ENCODE measurements at regions of chr10 and their contacts with region 1.

Region 1: GRCh38 chr10:118241229-118242137 is 100.6 kb downstream of the FAM204A start:
- DNase-seq: peak; percentile 67
- ATAC-seq: no peak
- H3K4me3 ChIP-seq: no peak overlapping the region
- H3K4me3 Mint-ChIP-seq: no peak overlapping the region
- H3K27ac ChIP-seq: no peak overlapping the region
- H3K27ac Mint-ChIP-seq: no peak overlapping the region
- H3K4me1 ChIP-seq: no peaks in the 10 kb centered on the region
- H3K4me1 Mint-ChIP-seq: no peaks in the 10 kb centered on the region
- H3K27me3 ChIP-seq: peaks cover 0 to 25% (median 12%) of the 10 kb centered on the region in 4 experiments
- H3K27me3 Mint-ChIP-seq: peaks cover 48% of the 10 kb centered on the region
- CTCF ChIP-seq: peak; percentile 99

Region 2: DNA sequence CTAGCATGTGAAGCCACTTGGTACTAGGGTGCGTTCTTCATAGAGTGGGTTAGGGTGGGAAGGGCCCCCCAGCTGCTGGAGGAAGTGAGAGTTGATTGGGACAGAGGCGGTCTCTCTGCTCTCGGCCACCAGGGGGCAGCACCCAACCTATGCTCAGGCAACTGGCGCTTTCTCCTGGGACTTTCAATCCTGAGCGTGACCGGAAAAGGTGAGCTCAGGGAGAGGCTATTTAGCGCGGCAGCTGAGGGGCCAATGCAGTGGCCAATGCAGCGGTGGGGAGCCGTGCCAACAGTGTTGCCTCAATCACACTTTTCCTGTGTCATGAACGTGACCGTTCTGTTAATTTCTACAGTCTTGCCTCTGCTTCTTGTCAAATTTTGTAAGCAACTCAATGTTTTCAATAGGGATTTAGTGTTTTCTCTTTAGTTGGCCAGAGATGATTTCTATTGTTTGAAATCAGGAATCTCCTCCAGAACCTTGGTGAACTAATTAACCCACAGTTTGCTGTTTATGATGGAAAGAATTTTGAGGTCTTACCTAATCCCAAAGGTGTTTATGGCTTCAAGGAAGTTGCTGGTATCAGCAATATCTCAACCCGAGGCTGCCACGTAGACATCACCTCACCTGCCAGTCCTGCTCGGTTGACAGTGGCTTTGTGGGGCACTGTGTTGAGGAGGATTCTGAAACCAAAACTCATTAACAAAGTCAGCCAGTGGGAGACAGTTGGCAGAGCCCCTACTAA is 798.4 kb before region 1 on chr10:
- CTCF ChIA-PET with region 1: interaction called, 5 read pairs
- POLR2A ChIA-PET with region 1: no interaction called
- intact Hi-C with region 1: loop called (anchors 5 kb)
- DNase-seq: peak; percentile 43
- ATAC-seq: peak; percentile 54
- H3K4me3 ChIP-seq: peak overlapping the region in 1 of 5 experiments; percentile 9
- H3K4me3 Mint-ChIP-seq: no peak overlapping the region
- H3K27ac ChIP-seq: no peak overlapping the region
- H3K27ac Mint-ChIP-seq: no peak overlapping the region
- H3K4me1 ChIP-seq: peaks cover 0 to 3% of the 10 kb centered on the region in 2 donors
- H3K4me1 Mint-ChIP-seq: peaks cover 5% of the 10 kb centered on the region
- H3K27me3 ChIP-seq: no peaks in the 10 kb centered on the region
- H3K27me3 Mint-ChIP-seq: peaks cover 28% of the 10 kb centered on the region
- CTCF ChIP-seq: peak; percentile 83

Region 3: GRCh38 chr10:117609095-117609795 is 632.2 kb before region 1 on chr10:
- CTCF ChIA-PET with region 1: no interaction called
- POLR2A ChIA-PET with region 1: no interaction called
- intact Hi-C with region 1: no loop called
- DNase-seq: no peak
- ATAC-seq: no peak
- H3K4me3 ChIP-seq: no peak overlapping the region
- H3K4me3 Mint-ChIP-seq: no peak overlapping the region
- H3K27ac ChIP-seq: no peak overlapping the region
- H3K27ac Mint-ChIP-seq: no peak overlapping the region
- H3K4me1 ChIP-seq: no peaks in the 10 kb centered on the region
- H3K4me1 Mint-ChIP-seq: no peaks in the 10 kb centered on the region
- H3K27me3 ChIP-seq: peaks cover 0 to 3% (median 0%) of the 10 kb centered on the region in 4 experiments
- H3K27me3 Mint-ChIP-seq: peaks cover 6% of the 10 kb centered on the region
- CTCF ChIP-seq: no peak

Region 4: GRCh38 chr10:117914334-117914733 is 327.1 kb before region 1 on chr10:
- CTCF ChIA-PET with region 1: no interaction called
- POLR2A ChIA-PET with region 1: no interaction called
- intact Hi-C with region 1: no loop called
- DNase-seq: no peak
- ATAC-seq: no peak
- H3K4me3 ChIP-seq: no peak overlapping the region
- H3K4me3 Mint-ChIP-seq: no peak overlapping the region
- H3K27ac ChIP-seq: no peak overlapping the region
- H3K27ac Mint-ChIP-seq: no peak overlapping the region
- H3K4me1 ChIP-seq: no peaks in the 10 kb centered on the region
- H3K4me1 Mint-ChIP-seq: no peaks in the 10 kb centered on the region
- H3K27me3 ChIP-seq: peaks cover 0 to 5% (median 3%) of the 10 kb centered on the region in 4 experiments
- H3K27me3 Mint-ChIP-seq: peaks cover 34% of the 10 kb centered on the region
- CTCF ChIP-seq: no peak

Region 5: GRCh38 chr10:118183180-118183579 is 58.3 kb before region 1 on chr10:
- CTCF ChIA-PET with region 1: no interaction called
- POLR2A ChIA-PET with region 1: no interaction called
- intact Hi-C with region 1: no loop called
- DNase-seq: no peak
- ATAC-seq: no peak
- H3K4me3 ChIP-seq: no peak overlapping the region
- H3K4me3 Mint-ChIP-seq: no peak overlapping the region
- H3K27ac ChIP-seq: no peak overlapping the region
- H3K27ac Mint-ChIP-seq: no peak overlapping the region
- H3K4me1 ChIP-seq: no peaks in the 10 kb centered on the region
- H3K4me1 Mint-ChIP-seq: no peaks in the 10 kb centered on the region
- H3K27me3 ChIP-seq: no peaks in the 10 kb centered on the region
- H3K27me3 Mint-ChIP-seq: peaks cover 2% of the 10 kb centered on the region
- CTCF ChIP-seq: no peak